ENCODE measurements at regions of chr10 and their contacts with region 1.

Region 1: DNA sequence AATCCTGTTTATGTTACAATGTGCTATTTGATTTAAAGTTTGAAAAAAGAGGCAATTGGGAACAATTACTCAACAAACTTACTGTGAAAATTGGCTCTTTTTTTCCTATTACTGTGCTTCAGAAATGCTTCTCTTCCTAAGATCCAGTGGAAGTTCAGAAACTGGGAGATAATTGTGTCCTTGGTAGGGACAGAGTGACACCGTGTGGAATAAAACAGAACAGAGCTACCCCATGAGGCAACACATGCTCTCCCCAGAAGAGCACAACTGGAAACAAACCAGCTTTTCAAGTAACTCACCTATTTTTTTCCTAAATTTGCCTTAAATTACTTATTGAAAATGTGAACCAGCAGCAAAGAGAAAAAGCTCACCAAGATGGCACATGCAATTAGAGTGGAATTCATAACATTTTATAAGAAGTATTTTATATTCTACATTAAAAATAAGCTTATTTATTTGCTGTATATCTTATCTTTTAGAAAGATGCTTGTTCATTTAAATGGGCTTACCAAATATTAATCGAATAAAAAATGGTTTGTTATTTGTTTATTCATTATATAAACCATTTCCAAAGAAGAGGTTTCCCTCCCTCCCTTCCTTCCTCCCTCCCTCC is 346.1 kb upstream of the ANKRD30A start:
- DNase-seq: peak; percentile 21 to 69 (median 31)
- H3K4me3 ChIP-seq: no peak overlapping the region
- H3K27ac ChIP-seq: no peak overlapping the region
- H3K4me1 ChIP-seq: no peaks in the 10 kb centered on the region
- H3K27me3 ChIP-seq: no peaks in the 10 kb centered on the region
- CTCF ChIP-seq: peak; percentile 48 to 87 (median 82)
- POLR2A ChIP-seq: no peak

Region 2: GRCh38 chr10:35642027-35642792 is 1137.1 kb before region 1 on chr10 and contains the start of gene FZD8:
- intact Hi-C with region 1: loop called (anchors 5 kb)
- DNase-seq: peak; percentile 88 to 93 (median 91)
- H3K4me3 ChIP-seq: peak within 1 kb of the TSS; percentile 11 to 71 (median 42)
- H3K27ac ChIP-seq: peak within 1 kb of the TSS in 4 of 5 donors; percentile 59 to 81 (median 74)
- H3K4me1 ChIP-seq: peaks cover 17 to 21% of the 10 kb centered on the region in 2 donors
- H3K27me3 ChIP-seq: no peaks in the 10 kb centered on the region
- CTCF ChIP-seq: peak in 1 of 6 experiments; percentile 10
- POLR2A ChIP-seq: peak; percentile 55 to 86
- total RNA-seq, gene FZD8: 2.8 to 5.9 (median 3.9) TPM

Region 3: GRCh38 chr10:36888929-36889573 is 109.7 kb after region 1 on chr10:
- intact Hi-C with region 1: no loop called
- DNase-seq: peak in 1 of 7 donors; percentile 77
- H3K4me3 ChIP-seq: no peak overlapping the region
- H3K27ac ChIP-seq: no peak overlapping the region
- H3K4me1 ChIP-seq: no peaks in the 10 kb centered on the region
- H3K27me3 ChIP-seq: no peaks in the 10 kb centered on the region
- CTCF ChIP-seq: no peak
- POLR2A ChIP-seq: no peak

Measured in adrenal gland (tissue), 19 donors.